ENCODE measurements at regions of chr7 and their contacts with region 1.

Region 1: GRCh38 chr7:134986363-134987251 is at the start of gene AGBL3:
- DNase-seq: peak; percentile 78 to 94 (median 89)
- ATAC-seq: peak; percentile 87
- H3K4me3 ChIP-seq: peak within 1 kb of the TSS; percentile 73 to 83
- H3K4me3 Mint-ChIP-seq: peak within 1 kb of the TSS; percentile 98
- H3K27ac ChIP-seq: peak within 1 kb of the TSS; percentile 90 to 99
- H3K27ac Mint-ChIP-seq: peak within 1 kb of the TSS; percentile 99
- H3K4me1 ChIP-seq: peaks cover 35% of the 10 kb centered on the region
- H3K4me1 Mint-ChIP-seq: peaks cover 42% of the 10 kb centered on the region
- H3K27me3 ChIP-seq: no peaks in the 10 kb centered on the region
- H3K27me3 Mint-ChIP-seq: no peaks in the 10 kb centered on the region
- CTCF ChIP-seq: peak; percentile 68
- total RNA-seq, gene AGBL3: 2.7 to 2.8 TPM

Region 2: DNA sequence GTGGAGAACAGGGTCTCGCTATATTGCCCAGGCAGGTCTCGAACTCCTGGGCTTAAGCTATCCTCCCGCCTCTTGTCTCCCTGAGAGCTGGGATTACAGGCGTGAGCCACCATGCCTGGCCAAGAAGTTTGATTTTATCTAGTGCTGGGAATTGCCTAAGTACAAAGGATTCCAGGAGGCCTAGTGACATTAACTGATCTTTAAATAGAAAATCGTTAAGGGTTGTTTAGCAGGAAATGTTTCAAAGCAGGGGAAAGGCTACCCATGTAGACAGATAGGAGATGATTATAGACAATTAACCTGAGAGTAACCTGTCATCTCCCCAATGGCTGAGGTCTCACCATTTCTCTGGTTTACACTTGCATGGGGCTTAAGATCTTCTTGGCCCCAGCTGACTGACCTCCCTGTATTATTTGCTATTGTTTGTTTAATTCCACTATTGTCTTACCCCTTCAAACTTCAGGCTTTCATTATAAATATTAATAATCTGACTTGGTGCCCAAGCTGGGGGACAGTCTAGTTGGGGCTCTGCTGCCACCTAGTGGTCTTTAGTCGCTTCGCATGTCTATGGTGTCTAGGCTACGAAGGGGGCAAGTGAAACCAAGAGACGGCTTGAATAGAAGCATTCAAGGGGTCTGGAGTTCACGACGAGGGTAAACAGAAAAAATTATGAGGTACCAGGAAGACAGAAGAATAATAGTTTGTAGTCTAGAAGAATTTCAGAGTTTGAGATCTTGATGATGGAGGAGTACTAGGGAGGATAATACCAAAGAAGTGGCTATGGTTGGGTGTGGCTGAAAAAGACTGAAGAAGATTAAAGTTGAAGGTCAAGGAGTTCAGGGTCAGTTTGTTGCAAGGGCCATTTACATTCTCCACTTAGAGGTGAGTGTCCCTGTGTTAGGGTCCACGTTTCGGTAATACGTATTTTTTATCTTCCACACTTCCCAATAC is 380.4 kb before region 1 on chr7:
- CTCF ChIA-PET with region 1: no interaction called
- POLR2A ChIA-PET with region 1: no interaction called
- intact Hi-C with region 1: no loop called
- DNase-seq: peak; percentile 25 to 75 (median 60)
- ATAC-seq: peak; percentile 89
- H3K4me3 ChIP-seq: no peak overlapping the region
- H3K4me3 Mint-ChIP-seq: peak overlapping the region; percentile 29
- H3K27ac ChIP-seq: no peak overlapping the region
- H3K27ac Mint-ChIP-seq: no peak overlapping the region
- H3K4me1 ChIP-seq: no peaks in the 10 kb centered on the region
- H3K4me1 Mint-ChIP-seq: peaks cover 5% of the 10 kb centered on the region
- H3K27me3 ChIP-seq: peaks cover 0 to 4% of the 10 kb centered on the region in 2 experiments
- H3K27me3 Mint-ChIP-seq: peaks cover 28% of the 10 kb centered on the region
- CTCF ChIP-seq: peak; percentile 95

Region 3: GRCh38 chr7:134954197-134955082 is 32.2 kb before region 1 on chr7:
- CTCF ChIA-PET with region 1: interaction called, 14 read pairs
- POLR2A ChIA-PET with region 1: no interaction called
- intact Hi-C with region 1: no loop called
- DNase-seq: peak in 2 of 9 experiments; percentile 43 to 64
- ATAC-seq: no peak
- H3K4me3 ChIP-seq: no peak overlapping the region
- H3K4me3 Mint-ChIP-seq: no peak overlapping the region
- H3K27ac ChIP-seq: no peak overlapping the region
- H3K27ac Mint-ChIP-seq: no peak overlapping the region
- H3K4me1 ChIP-seq: no peaks in the 10 kb centered on the region
- H3K4me1 Mint-ChIP-seq: no peaks in the 10 kb centered on the region
- H3K27me3 ChIP-seq: no peaks in the 10 kb centered on the region
- H3K27me3 Mint-ChIP-seq: peaks cover 2% of the 10 kb centered on the region
- CTCF ChIP-seq: peak; percentile 74

Region 4: GRCh38 chr7:135074085-135074484 is 87.5 kb after region 1 on chr7:
- CTCF ChIA-PET with region 1: no interaction called
- POLR2A ChIA-PET with region 1: no interaction called
- intact Hi-C with region 1: no loop called
- DNase-seq: no peak
- ATAC-seq: no peak
- H3K4me3 ChIP-seq: no peak overlapping the region
- H3K4me3 Mint-ChIP-seq: no peak overlapping the region
- H3K27ac ChIP-seq: no peak overlapping the region
- H3K27ac Mint-ChIP-seq: no peak overlapping the region
- H3K4me1 ChIP-seq: no peaks in the 10 kb centered on the region
- H3K4me1 Mint-ChIP-seq: no peaks in the 10 kb centered on the region
- H3K27me3 ChIP-seq: no peaks in the 10 kb centered on the region
- H3K27me3 Mint-ChIP-seq: no peaks in the 10 kb centered on the region
- CTCF ChIP-seq: no peak

Region 5: DNA sequence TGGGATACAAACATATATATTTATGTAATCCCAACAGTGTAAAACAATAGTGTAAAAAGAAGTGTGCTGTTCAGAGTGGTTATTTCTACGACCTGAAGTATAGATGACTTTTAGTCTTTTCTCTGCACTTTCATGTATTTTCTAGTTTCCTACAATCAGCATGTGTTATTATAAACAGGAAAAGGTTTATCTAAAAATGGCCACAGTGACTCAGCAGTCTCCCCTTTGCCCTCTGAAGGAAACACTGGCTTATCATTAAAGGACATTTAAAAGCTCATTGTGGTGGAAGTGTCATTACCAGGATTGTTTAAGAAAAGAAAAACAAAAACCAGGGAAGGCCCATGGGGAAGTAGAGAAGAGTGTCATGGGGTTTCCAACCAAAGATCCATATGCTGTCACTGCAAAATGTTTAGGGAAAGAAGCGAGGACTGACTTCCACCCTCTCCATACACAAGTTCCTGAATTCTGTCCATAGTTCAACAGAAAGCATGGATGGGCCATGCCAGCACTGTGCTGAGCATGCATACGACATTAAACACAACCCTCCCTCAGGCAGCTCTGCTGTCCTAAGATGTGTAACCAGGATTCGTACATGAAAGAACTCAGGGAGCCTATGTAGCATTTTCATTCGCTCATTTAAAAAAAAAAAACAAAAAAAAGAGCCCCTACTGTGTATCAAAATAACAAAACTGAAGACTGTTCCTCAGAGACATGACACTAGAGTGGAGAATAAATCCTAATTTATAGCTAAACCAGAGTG is 173.7 kb after region 1 on chr7:
- CTCF ChIA-PET with region 1: interaction called, 17 read pairs
- POLR2A ChIA-PET with region 1: interaction called, 4 read pairs
- intact Hi-C with region 1: no loop called
- DNase-seq: peak in 1 of 9 experiments; percentile 36
- ATAC-seq: no peak
- H3K4me3 ChIP-seq: no peak overlapping the region
- H3K4me3 Mint-ChIP-seq: no peak overlapping the region
- H3K27ac ChIP-seq: peak overlapping the region in 1 of 2 experiments; percentile 53
- H3K27ac Mint-ChIP-seq: peak overlapping the region; percentile 72
- H3K4me1 ChIP-seq: peaks cover 27% of the 10 kb centered on the region
- H3K4me1 Mint-ChIP-seq: peaks cover 64% of the 10 kb centered on the region
- H3K27me3 ChIP-seq: no peaks in the 10 kb centered on the region
- H3K27me3 Mint-ChIP-seq: no peaks in the 10 kb centered on the region
- CTCF ChIP-seq: no peak

Region 6: GRCh38 chr7:135211179-135211945 is 224.8 kb after region 1 on chr7 and contains the start of gene WDR91:
- CTCF ChIA-PET with region 1: interaction called, 6 read pairs
- POLR2A ChIA-PET with region 1: interaction called, 5 read pairs
- intact Hi-C with region 1: loop called (anchors 1 to 2 kb)
- DNase-seq: peak; percentile 95 to 98 (median 96)
- ATAC-seq: peak; percentile 93
- H3K4me3 ChIP-seq: peak within 1 kb of the TSS; percentile 74 to 91
- H3K4me3 Mint-ChIP-seq: peak within 1 kb of the TSS; percentile 97
- H3K27ac ChIP-seq: peak within 1 kb of the TSS; percentile 80 to 91
- H3K27ac Mint-ChIP-seq: peak within 1 kb of the TSS; percentile 99
- H3K4me1 ChIP-seq: peaks cover 12% of the 10 kb centered on the region
- H3K4me1 Mint-ChIP-seq: peaks cover 42% of the 10 kb centered on the region
- H3K27me3 ChIP-seq: no peaks in the 10 kb centered on the region
- H3K27me3 Mint-ChIP-seq: no peaks in the 10 kb centered on the region
- CTCF ChIP-seq: no peak
- total RNA-seq, gene WDR91: 43.3 to 46.6 TPM

Region 7: DNA sequence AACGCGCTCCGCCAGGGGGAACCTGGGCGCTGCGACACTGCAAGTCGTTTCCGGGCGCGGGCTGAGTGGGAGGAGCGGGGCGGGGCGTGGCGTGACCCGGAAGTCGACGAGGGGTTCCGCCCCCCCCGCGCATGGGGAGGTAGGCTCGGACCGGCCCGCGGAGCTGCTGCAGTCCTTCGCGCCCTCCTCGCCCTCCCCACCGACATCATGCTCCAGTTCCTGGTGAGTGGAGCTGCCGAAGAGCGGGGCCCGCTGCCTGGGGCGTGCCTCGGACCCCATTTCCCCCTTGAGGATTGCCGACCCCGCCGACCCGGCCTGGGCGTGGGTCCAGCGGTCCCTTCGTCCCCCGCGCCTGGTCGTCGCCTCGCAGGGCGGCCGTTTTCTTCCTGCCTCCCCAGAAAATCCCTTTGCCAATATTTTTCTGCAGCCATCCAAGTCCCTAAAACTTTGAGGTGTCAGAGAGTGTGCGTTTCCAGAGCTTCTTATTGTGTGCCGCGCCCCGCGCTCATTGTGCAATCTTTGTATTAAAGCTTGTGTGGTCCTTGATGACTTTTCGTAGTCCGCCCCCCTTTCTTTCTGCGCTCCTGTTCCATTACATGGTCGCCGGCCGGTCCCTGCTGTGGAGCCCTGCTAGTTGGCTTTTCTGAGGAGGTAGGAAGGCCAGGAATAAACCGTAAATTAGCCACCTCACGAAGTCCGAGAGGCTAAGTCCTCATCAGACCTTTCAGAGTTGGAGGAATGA is 675.9 kb after region 1 on chr7 and contains the start of gene STMP1:
- CTCF ChIA-PET with region 1: no interaction called
- POLR2A ChIA-PET with region 1: interaction called, 3 read pairs
- intact Hi-C with region 1: loop called in 1 of 2 experiments (anchors 5 kb)
- DNase-seq: peak; percentile 91 to 99 (median 96)
- ATAC-seq: peak; percentile 99
- H3K4me3 ChIP-seq: peak within 1 kb of the TSS; percentile 72 to 76
- H3K4me3 Mint-ChIP-seq: peak within 1 kb of the TSS; percentile 90
- H3K27ac ChIP-seq: peak within 1 kb of the TSS; percentile 53 to 65
- H3K27ac Mint-ChIP-seq: peak within 1 kb of the TSS; percentile 88
- H3K4me1 ChIP-seq: peaks cover 20% of the 10 kb centered on the region
- H3K4me1 Mint-ChIP-seq: peaks cover 41% of the 10 kb centered on the region
- H3K27me3 ChIP-seq: no peaks in the 10 kb centered on the region
- H3K27me3 Mint-ChIP-seq: no peaks in the 10 kb centered on the region
- CTCF ChIP-seq: peak; percentile 64
- total RNA-seq, gene STMP1: 9.4 to 11.5 TPM